Activated CD4-positive, alpha-beta memory T cell treated with anti-CD3 and anti-CD28 coated beads for 36 hours (primary cell): ENCODE measurements at regions of chr9 and their contacts with region 1.

Region 1: GRCh38 chr9:6645355-6646292 is at the start of gene GLDC:
- DNase-seq: peak; percentile 62
- H3K4me3 Mint-ChIP-seq: peak within 1 kb of the TSS; percentile 79
- H3K27ac Mint-ChIP-seq: no peak within 1 kb of the TSS
- H3K4me1 Mint-ChIP-seq: peaks cover 17% of the 10 kb centered on the region
- H3K27me3 Mint-ChIP-seq: peaks cover 38% of the 10 kb centered on the region
- total RNA-seq, gene GLDC: 7.1 to 9.9 TPM

Region 2: GRCh38 chr9:6598249-6598725 is 47.3 kb before region 1 on chr9:
- CTCF ChIA-PET with region 1: no interaction called
- POLR2A ChIA-PET with region 1: interaction called, 3 read pairs
- intact Hi-C with region 1: loop called (anchors 1 kb)
- DNase-seq: peak; percentile 74
- H3K4me3 Mint-ChIP-seq: peak overlapping the region; percentile 47
- H3K27ac Mint-ChIP-seq: peak overlapping the region; percentile 87
- H3K4me1 Mint-ChIP-seq: peaks cover 8% of the 10 kb centered on the region
- H3K27me3 Mint-ChIP-seq: peaks cover 1% of the 10 kb centered on the region